IMR-90 (cell line): ENCODE measurements at regions of chr17 and their contacts with region 1.

Region 1: GRCh38 chr17:50689251-50689650 is 18.5 kb downstream of the ANKRD40 start:
- DNase-seq: peak; percentile 66
- ATAC-seq: peak; percentile 56
- H3K4me3 ChIP-seq: no peak overlapping the region
- H3K27ac ChIP-seq: no peak overlapping the region
- H3K4me1 ChIP-seq: peaks cover 50% of the 10 kb centered on the region
- H3K27me3 ChIP-seq: no peaks in the 10 kb centered on the region
- CTCF ChIP-seq: no peak
- POLR2A ChIP-seq: no peak
- RAD21 ChIP-seq: no peak

Region 2: DNA sequence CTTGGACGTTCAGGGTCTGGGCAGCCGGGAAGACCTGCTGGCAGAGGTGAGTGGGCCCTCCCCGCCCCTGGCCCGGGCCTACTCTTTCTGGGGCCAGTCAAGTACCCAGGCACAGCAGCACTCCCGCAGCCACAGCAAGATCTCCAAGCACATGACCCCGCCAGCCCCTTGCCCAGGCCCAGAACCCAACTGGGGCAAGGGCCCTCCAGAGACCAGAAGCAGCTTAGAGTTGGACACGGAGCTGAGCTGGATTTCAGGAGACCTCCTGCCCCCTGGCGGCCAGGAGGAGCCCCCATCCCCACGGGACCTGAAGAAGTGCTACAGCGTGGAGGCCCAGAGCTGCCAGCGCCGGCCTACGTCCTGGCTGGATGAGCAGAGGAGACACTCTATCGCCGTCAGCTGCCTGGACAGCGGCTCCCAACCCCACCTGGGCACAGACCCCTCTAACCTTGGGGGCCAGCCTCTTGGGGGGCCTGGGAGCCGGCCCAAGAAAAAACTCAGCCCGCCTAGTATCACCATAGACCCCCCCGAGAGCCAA is 63.1 kb before region 1 on chr17:
- CTCF ChIA-PET with region 1: interaction called, 4 read pairs
- POLR2A ChIA-PET with region 1: no interaction called
- dilution Hi-C with region 1: no loop called
- in situ Hi-C with region 1: no loop called
- intact Hi-C with region 1: loop called (anchors 2 kb)
- DNase-seq: peak; percentile 62
- ATAC-seq: peak; percentile 84
- H3K4me3 ChIP-seq: no peak overlapping the region
- H3K27ac ChIP-seq: no peak overlapping the region
- H3K4me1 ChIP-seq: peaks cover 5% of the 10 kb centered on the region
- H3K27me3 ChIP-seq: peaks cover 7% of the 10 kb centered on the region; the same call in 1 of the 2 replicates
- CTCF ChIP-seq: peak; percentile 70
- POLR2A ChIP-seq: no peak
- RAD21 ChIP-seq: peak; percentile 79

Region 3: DNA sequence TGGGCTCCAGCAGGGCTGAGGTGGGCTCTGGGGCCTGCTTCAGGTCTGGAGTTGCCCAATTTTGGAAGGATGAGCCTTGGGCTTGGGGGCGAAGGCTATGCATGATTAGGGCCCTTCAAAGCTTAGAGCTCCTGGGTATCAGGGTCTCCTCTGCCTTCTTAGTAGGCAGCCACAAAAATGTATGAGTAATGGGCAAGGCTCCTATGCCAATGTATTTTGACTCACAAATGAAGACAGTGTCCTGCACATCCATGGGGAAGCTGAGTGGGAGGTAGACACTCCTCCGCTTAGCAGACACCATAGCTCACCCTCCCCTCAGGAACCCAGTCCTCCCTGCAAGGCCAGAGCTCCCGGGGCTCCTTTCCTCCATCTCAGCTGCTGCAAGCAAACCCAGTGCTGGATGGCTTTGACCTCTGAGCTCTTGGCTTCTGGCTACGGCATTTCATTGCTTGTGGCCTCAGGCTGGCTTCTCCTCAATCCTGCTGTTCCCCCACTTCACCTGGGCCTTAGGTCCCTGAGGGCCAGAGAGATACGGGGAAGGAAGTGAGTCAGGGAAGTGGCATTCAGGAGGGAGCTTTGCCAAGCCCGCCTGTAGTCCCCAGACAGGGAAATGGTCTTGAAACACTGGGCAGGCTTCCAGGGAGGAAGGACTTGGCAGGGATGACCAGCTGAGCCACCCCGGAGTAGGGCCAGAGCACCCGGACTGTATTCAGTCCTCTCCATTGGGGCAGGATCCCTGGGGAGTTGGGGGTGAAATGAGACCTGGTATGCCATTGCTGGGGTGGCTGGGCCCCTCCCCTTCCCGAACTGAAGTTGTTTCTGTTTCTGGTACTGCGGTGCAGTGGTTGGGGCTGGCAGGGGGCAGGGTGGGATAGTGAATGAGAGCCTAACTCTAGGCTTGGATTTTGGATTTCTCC is 50.1 kb before region 1 on chr17:
- CTCF ChIA-PET with region 1: no interaction called
- POLR2A ChIA-PET with region 1: no interaction called
- dilution Hi-C with region 1: no loop called
- in situ Hi-C with region 1: no loop called
- intact Hi-C with region 1: loop called (anchors 2 kb)
- DNase-seq: peak; percentile 97
- ATAC-seq: peak; percentile 79
- H3K4me3 ChIP-seq: no peak overlapping the region
- H3K27ac ChIP-seq: peak overlapping the region; percentile 75
- H3K4me1 ChIP-seq: peaks cover 45% of the 10 kb centered on the region
- H3K27me3 ChIP-seq: no peaks in the 10 kb centered on the region
- CTCF ChIP-seq: no peak
- POLR2A ChIP-seq: no peak
- RAD21 ChIP-seq: no peak

Region 4: GRCh38 chr17:50645748-50646682 is 43.2 kb before region 1 on chr17:
- CTCF ChIA-PET with region 1: no interaction called
- POLR2A ChIA-PET with region 1: interaction called, 13 read pairs
- dilution Hi-C with region 1: no loop called
- in situ Hi-C with region 1: no loop called
- intact Hi-C with region 1: no loop called
- DNase-seq: no peak
- ATAC-seq: no peak
- H3K4me3 ChIP-seq: no peak overlapping the region
- H3K27ac ChIP-seq: no peak overlapping the region
- H3K4me1 ChIP-seq: peaks cover 9% of the 10 kb centered on the region
- H3K27me3 ChIP-seq: no peaks in the 10 kb centered on the region
- CTCF ChIP-seq: no peak
- POLR2A ChIP-seq: no peak
- RAD21 ChIP-seq: no peak

Region 5: GRCh38 chr17:50661795-50662391 is 27.4 kb before region 1 on chr17:
- CTCF ChIA-PET with region 1: no interaction called
- POLR2A ChIA-PET with region 1: no interaction called
- dilution Hi-C with region 1: no loop called
- in situ Hi-C with region 1: no loop called
- intact Hi-C with region 1: no loop called
- DNase-seq: peak; percentile 93
- ATAC-seq: peak; percentile 69
- H3K4me3 ChIP-seq: no peak overlapping the region
- H3K27ac ChIP-seq: peak overlapping the region; percentile 72
- H3K4me1 ChIP-seq: peaks cover 32% of the 10 kb centered on the region
- H3K27me3 ChIP-seq: no peaks in the 10 kb centered on the region
- CTCF ChIP-seq: no peak
- POLR2A ChIP-seq: no peak
- RAD21 ChIP-seq: no peak